RWPE1 (cell line): ENCODE measurements at regions of chr2 and their contacts with region 1.

Region 1: DNA sequence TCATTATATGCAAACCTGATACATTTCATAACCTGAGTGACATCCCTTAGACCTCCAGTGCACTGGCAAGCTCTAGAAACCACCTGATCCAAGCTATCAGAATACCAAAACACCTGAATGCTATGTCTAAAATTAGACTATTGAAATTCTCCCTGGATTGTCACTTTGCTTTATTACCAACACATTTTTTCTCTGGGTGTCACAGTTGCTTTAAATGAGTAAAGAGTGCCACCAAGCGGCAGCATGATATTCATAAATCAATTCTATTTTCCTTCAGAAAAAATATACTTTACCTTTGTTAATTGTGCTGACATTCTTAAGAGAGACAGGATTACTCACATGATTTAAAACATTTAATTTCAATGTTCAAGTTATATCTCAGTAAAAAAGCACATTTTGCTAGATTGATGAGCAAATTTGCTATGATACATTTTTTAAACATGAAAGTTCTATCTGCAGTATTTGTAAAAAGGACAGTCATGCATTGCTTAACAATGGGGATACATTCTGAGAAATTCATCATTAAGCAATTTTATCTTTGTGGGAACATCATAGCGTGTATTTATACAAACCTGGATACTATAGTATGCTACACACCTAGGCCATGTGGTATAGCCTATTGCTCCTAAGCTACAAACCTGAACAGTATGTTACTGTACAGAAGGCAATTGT is 338.4 kb upstream of the SLC39A10 start:
- DNase-seq: peak; percentile 32
- H3K27ac ChIP-seq: no peak overlapping the region
- CTCF ChIP-seq: peak; percentile 66

Region 2: GRCh38 chr2:194545978-194546377 is 772.6 kb before region 1 on chr2:
- CTCF ChIA-PET with region 1: interaction called, 12 read pairs
- POLR2A ChIA-PET with region 1: no interaction called
- DNase-seq: no peak
- H3K27ac ChIP-seq: no peak overlapping the region
- CTCF ChIP-seq: peak; percentile 32; the same call in 1 of the 2 replicates